ENCODE measurements at regions of chr20 and their contacts with region 1.

Region 1: GRCh38 chr20:56247948-56248782 is at the start of gene MC3R:
- DNase-seq: peak; percentile 59
- H3K4me3 Mint-ChIP-seq: no peak within 1 kb of the TSS
- H3K27ac Mint-ChIP-seq: no peak within 1 kb of the TSS
- H3K4me1 Mint-ChIP-seq: no peaks in the 10 kb centered on the region
- H3K27me3 Mint-ChIP-seq: peaks cover 45% of the 10 kb centered on the region
- total RNA-seq, gene MC3R: not detected

Region 2: DNA sequence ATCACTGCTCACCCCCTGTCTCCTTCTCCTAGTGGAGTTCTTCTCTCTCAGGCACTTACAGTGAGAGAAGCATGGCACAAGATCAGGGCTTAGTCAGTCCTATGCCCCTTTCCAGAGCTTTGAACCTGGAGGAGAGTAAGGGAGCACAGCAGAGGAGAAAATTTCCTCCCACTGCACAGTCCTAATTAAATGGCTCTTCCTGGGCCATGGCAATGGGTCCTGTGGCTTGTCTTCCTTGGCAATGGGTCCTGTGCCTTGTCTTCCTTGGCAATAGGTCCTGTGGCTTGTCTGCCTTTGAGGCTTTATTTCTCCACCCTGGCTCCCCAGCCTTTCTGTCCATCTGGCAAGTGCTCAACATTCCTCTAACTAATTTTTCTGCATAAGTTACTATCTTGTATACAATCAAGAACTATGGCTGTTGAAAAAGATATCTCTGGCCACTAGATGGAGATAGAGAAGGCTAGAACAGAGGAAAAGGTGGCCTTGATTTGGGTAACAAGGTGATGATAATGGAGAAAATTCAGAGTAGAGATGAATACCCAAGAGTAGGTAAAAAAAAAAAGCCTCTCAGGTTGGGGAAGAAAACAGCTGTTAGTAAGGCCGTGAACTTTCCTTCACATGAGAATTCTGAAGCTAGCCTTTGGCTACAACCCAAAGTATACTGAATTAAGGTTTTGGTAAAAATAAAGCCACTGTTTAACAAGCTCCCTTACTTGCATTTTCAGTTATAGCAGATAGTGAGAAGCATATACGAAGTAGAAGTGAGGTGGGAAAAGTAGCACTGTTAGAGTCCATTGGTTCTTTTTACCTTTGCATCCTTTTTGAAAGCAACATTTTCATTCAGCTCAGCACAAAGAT is 1267.8 kb before region 1 on chr20:
- CTCF ChIA-PET with region 1: no interaction called
- intact Hi-C with region 1: loop called (anchors 5 kb)
- DNase-seq: no peak
- H3K4me3 Mint-ChIP-seq: no peak overlapping the region
- H3K27ac Mint-ChIP-seq: no peak overlapping the region
- H3K4me1 Mint-ChIP-seq: no peaks in the 10 kb centered on the region
- H3K27me3 Mint-ChIP-seq: no peaks in the 10 kb centered on the region

Region 3: DNA sequence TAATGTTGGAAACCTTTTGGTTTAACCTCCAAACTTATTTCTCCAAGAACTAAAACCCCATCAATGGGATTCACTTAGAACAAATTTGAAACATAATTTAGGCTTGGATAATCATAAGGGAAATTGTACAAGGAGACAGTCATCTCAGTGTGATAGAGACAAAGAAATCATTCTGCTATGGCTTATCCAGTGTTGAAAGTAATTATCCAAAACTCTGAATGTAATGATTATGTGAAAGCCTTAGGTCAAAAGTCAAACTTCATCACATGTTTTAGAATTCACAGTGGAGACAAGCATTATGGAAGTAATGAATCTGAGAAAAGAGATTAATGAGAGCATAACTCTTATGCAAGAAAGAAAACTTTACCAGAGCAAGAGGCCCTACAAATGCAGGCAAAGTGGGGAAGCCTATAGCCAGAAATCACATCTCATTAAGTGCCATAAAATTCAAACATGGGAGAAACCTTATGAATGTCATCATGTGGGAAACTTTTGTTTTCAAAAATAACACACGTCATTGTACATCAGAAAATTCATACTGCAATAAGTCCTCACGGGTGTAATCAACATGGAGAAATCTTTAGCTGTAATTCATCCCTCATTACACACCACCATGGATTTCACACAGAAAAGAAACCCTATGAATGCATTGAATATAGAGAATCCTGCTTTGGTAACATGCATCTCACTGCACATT is 20.5 kb after region 1 on chr20:
- CTCF ChIA-PET with region 1: no interaction called
- intact Hi-C with region 1: no loop called
- DNase-seq: no peak
- H3K4me3 Mint-ChIP-seq: no peak overlapping the region
- H3K27ac Mint-ChIP-seq: no peak overlapping the region
- H3K4me1 Mint-ChIP-seq: no peaks in the 10 kb centered on the region
- H3K27me3 Mint-ChIP-seq: peaks cover 9% of the 10 kb centered on the region

Region 4: DNA sequence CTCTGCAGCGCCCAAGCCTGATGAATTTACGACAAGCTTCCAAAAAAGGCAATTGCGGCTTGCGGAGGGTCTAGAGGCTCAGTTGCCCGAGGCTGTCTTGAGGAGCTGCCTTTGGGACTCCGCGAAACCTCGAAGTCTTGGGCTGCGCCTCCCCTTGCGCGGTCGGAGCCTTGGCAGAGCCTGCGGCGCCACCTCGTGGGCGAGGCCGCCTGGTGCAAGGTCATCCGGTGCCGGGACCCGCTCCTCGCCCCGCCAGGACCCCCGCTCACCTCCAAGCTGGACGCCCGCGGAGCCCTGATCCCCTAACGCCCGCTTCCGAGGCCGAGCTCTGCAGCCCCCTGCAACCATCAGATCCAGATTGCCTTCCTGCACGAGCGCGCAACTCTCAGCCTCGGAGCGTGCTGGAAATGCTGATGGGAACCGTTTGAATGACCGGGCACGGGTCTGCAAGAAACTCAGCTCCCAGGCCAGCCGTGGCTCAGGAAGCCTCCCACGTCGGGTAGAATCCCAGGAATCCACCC is 95.8 kb after region 1 on chr20:
- CTCF ChIA-PET with region 1: interaction called, 8 read pairs
- intact Hi-C with region 1: loop called (anchors 1 kb)
- DNase-seq: peak; percentile 56
- H3K4me3 Mint-ChIP-seq: no peak overlapping the region
- H3K27ac Mint-ChIP-seq: no peak overlapping the region
- H3K4me1 Mint-ChIP-seq: peaks cover 10% of the 10 kb centered on the region
- H3K27me3 Mint-ChIP-seq: peaks cover 48% of the 10 kb centered on the region

Region 5: DNA sequence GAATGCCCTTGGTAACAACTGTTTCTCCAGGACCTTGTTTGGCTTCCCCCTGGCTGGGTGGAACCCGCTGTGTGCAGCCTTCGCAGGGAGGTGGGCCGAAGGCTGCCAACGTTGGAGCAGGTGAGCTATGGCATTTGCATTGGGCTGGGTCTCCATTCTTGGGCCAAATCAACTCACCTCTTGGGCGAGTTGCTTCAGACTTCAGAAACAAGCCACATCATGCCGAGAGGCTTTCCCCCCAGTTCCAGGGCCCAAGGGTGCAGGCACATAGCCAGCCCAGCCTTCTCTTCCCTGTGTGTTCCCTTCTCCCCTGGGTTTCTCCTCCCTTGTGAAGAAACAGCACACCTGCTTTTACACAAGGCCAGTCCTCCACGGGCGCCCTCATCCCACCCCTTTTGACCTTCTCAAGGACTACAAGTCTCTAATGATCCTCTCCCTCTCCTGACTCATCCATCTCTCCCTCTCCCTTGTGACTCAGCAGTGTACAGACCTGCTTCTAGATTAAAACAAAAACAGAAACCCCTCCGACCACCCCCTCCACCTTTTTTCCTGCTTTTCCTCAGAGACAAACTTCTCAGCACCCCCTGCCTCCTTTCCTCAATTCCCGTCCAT is 326.5 kb after region 1 on chr20:
- CTCF ChIA-PET with region 1: no interaction called
- intact Hi-C with region 1: loop called (anchors 5 kb)
- DNase-seq: no peak
- H3K4me3 Mint-ChIP-seq: no peak overlapping the region
- H3K27ac Mint-ChIP-seq: no peak overlapping the region
- H3K4me1 Mint-ChIP-seq: no peaks in the 10 kb centered on the region
- H3K27me3 Mint-ChIP-seq: peaks cover 6% of the 10 kb centered on the region

Region 6: GRCh38 chr20:56875046-56875551 is 626.9 kb after region 1 on chr20:
- CTCF ChIA-PET with region 1: no interaction called
- intact Hi-C with region 1: no loop called
- DNase-seq: no peak
- H3K4me3 Mint-ChIP-seq: no peak overlapping the region
- H3K27ac Mint-ChIP-seq: no peak overlapping the region
- H3K4me1 Mint-ChIP-seq: no peaks in the 10 kb centered on the region
- H3K27me3 Mint-ChIP-seq: no peaks in the 10 kb centered on the region